ENCODE measurements at regions of chr5 and their contacts with region 1.

Region 1: GRCh38 chr5:54517174-54518092 is at the start of gene SNX18:
- DNase-seq: peak; percentile 94
- ATAC-seq: peak; percentile 85
- H3K4me3 ChIP-seq: peak within 1 kb of the TSS; percentile 69 to 97 (median 92)
- H3K4me3 Mint-ChIP-seq: peak within 1 kb of the TSS; percentile 92
- H3K27ac ChIP-seq: peak within 1 kb of the TSS; percentile 9 to 70
- H3K27ac Mint-ChIP-seq: peak within 1 kb of the TSS; percentile 84
- H3K4me1 ChIP-seq: peaks cover 30 to 47% of the 10 kb centered on the region in 2 donors
- H3K4me1 Mint-ChIP-seq: peaks cover 45% of the 10 kb centered on the region
- H3K27me3 ChIP-seq: no peaks in the 10 kb centered on the region
- H3K27me3 Mint-ChIP-seq: no peaks in the 10 kb centered on the region
- CTCF ChIP-seq: peak; percentile 90
- total RNA-seq, gene SNX18: 31.6 and 34.2 TPM in 2 replicates

Region 2: GRCh38 chr5:54492178-54492577 is 25.3 kb before region 1 on chr5:
- CTCF ChIA-PET with region 1: interaction called, 17 read pairs
- POLR2A ChIA-PET with region 1: no interaction called
- intact Hi-C with region 1: no loop called
- DNase-seq: no peak
- ATAC-seq: no peak
- H3K4me3 ChIP-seq: no peak overlapping the region
- H3K4me3 Mint-ChIP-seq: no peak overlapping the region
- H3K27ac ChIP-seq: no peak overlapping the region
- H3K27ac Mint-ChIP-seq: no peak overlapping the region
- H3K4me1 ChIP-seq: no peaks in the 10 kb centered on the region
- H3K4me1 Mint-ChIP-seq: no peaks in the 10 kb centered on the region
- H3K27me3 ChIP-seq: peaks cover 0 to 5% (median 1%) of the 10 kb centered on the region in 4 experiments
- H3K27me3 Mint-ChIP-seq: peaks cover 8% of the 10 kb centered on the region
- CTCF ChIP-seq: no peak

Region 3: GRCh38 chr5:54646356-54647101 is 129.1 kb after region 1 on chr5:
- CTCF ChIA-PET with region 1: interaction called, 12 read pairs
- POLR2A ChIA-PET with region 1: no interaction called
- intact Hi-C with region 1: loop called (anchors 1 kb)
- DNase-seq: peak; percentile 88
- ATAC-seq: peak; percentile 89
- H3K4me3 ChIP-seq: peak overlapping the region; percentile 7 to 49 (median 41)
- H3K4me3 Mint-ChIP-seq: peak overlapping the region; percentile 79
- H3K27ac ChIP-seq: peak overlapping the region; percentile 87 to 88
- H3K27ac Mint-ChIP-seq: peak overlapping the region; percentile 98
- H3K4me1 ChIP-seq: peaks cover 61 to 67% of the 10 kb centered on the region in 2 donors
- H3K4me1 Mint-ChIP-seq: peaks cover 68% of the 10 kb centered on the region
- H3K27me3 ChIP-seq: no peaks in the 10 kb centered on the region
- H3K27me3 Mint-ChIP-seq: no peaks in the 10 kb centered on the region
- CTCF ChIP-seq: no peak

Region 4: GRCh38 chr5:54753034-54753433 is 235.6 kb after region 1 on chr5:
- CTCF ChIA-PET with region 1: interaction called, 8 read pairs
- POLR2A ChIA-PET with region 1: no interaction called
- intact Hi-C with region 1: loop called (anchors 2 kb)
- DNase-seq: peak; percentile 47
- ATAC-seq: peak; percentile 84
- H3K4me3 ChIP-seq: peak overlapping the region in 4 of 5 experiments; percentile 5 to 54 (median 21)
- H3K4me3 Mint-ChIP-seq: peak overlapping the region; percentile 55
- H3K27ac ChIP-seq: peak overlapping the region; percentile 67 to 75
- H3K27ac Mint-ChIP-seq: peak overlapping the region; percentile 87
- H3K4me1 ChIP-seq: peaks cover 48 to 57% of the 10 kb centered on the region in 2 donors
- H3K4me1 Mint-ChIP-seq: peaks cover 61% of the 10 kb centered on the region
- H3K27me3 ChIP-seq: no peaks in the 10 kb centered on the region
- H3K27me3 Mint-ChIP-seq: no peaks in the 10 kb centered on the region
- CTCF ChIP-seq: no peak

Region 5: GRCh38 chr5:54844905-54845566 is 327.6 kb after region 1 on chr5:
- CTCF ChIA-PET with region 1: interaction called, 258 read pairs
- POLR2A ChIA-PET with region 1: interaction called, 12 read pairs
- intact Hi-C with region 1: loop called (anchors 1 kb)
- DNase-seq: peak; percentile 76
- ATAC-seq: peak; percentile 54
- H3K4me3 ChIP-seq: peak overlapping the region in 3 of 5 experiments; percentile 26 to 41 (median 28)
- H3K4me3 Mint-ChIP-seq: peak overlapping the region; percentile 85
- H3K27ac ChIP-seq: peak overlapping the region in 1 of 2 donors; percentile 70
- H3K27ac Mint-ChIP-seq: peak overlapping the region; percentile 91
- H3K4me1 ChIP-seq: peaks cover 5 to 10% of the 10 kb centered on the region in 2 donors
- H3K4me1 Mint-ChIP-seq: peaks cover 23% of the 10 kb centered on the region
- H3K27me3 ChIP-seq: no peaks in the 10 kb centered on the region
- H3K27me3 Mint-ChIP-seq: peaks cover 16% of the 10 kb centered on the region
- CTCF ChIP-seq: peak; percentile 78

Region 6: GRCh38 chr5:54874373-54874921 is 357.0 kb after region 1 on chr5:
- CTCF ChIA-PET with region 1: interaction called, 16 read pairs
- POLR2A ChIA-PET with region 1: no interaction called
- intact Hi-C with region 1: no loop called
- DNase-seq: no peak
- ATAC-seq: no peak
- H3K4me3 ChIP-seq: no peak overlapping the region
- H3K4me3 Mint-ChIP-seq: no peak overlapping the region
- H3K27ac ChIP-seq: no peak overlapping the region
- H3K27ac Mint-ChIP-seq: no peak overlapping the region
- H3K4me1 ChIP-seq: no peaks in the 10 kb centered on the region
- H3K4me1 Mint-ChIP-seq: no peaks in the 10 kb centered on the region
- H3K27me3 ChIP-seq: peaks cover 0 to 7% (median 5%) of the 10 kb centered on the region in 4 experiments
- H3K27me3 Mint-ChIP-seq: peaks cover 33% of the 10 kb centered on the region
- CTCF ChIP-seq: no peak

Measured in B cell (primary cell).